ENCODE measurements at regions of chrX and their contacts with region 1.

Region 1: GRCh38 chrX:50747471-50747900 is 66.5 kb downstream of the SHROOM4 start:
- DNase-seq: no peak
- ATAC-seq: 0 out of 2 replicates have a peak, but pooled peaks have one; percentile 44
- H3K4me3 ChIP-seq: no peak overlapping the region
- H3K27ac ChIP-seq: no peak overlapping the region
- H3K4me1 ChIP-seq: no peaks in the 10 kb centered on the region
- H3K27me3 ChIP-seq: no peaks in the 10 kb centered on the region
- CTCF ChIP-seq: peak; percentile 34 to 58 (median 55); a peak in 5 of 6 replicates
- POLR2A ChIP-seq: no peak
- RAD21 ChIP-seq: peak; percentile 60

Region 2: GRCh38 chrX:50877370-50877769 is 129.9 kb after region 1 on chrX:
- CTCF ChIA-PET with region 1: no interaction called
- POLR2A ChIA-PET with region 1: no interaction called
- RAD21 ChIA-PET with region 1: no interaction called
- intact Hi-C with region 1: no loop called
- DNase-seq: no peak
- ATAC-seq: no peak
- H3K4me3 ChIP-seq: no peak overlapping the region
- H3K27ac ChIP-seq: no peak overlapping the region
- H3K4me1 ChIP-seq: peaks cover 0 to 6% of the 10 kb centered on the region in 2 experiments; a peak in 2 of 4 replicates
- H3K27me3 ChIP-seq: no peaks in the 10 kb centered on the region
- CTCF ChIP-seq: no peak
- POLR2A ChIP-seq: no peak
- RAD21 ChIP-seq: no peak

Region 3: DNA sequence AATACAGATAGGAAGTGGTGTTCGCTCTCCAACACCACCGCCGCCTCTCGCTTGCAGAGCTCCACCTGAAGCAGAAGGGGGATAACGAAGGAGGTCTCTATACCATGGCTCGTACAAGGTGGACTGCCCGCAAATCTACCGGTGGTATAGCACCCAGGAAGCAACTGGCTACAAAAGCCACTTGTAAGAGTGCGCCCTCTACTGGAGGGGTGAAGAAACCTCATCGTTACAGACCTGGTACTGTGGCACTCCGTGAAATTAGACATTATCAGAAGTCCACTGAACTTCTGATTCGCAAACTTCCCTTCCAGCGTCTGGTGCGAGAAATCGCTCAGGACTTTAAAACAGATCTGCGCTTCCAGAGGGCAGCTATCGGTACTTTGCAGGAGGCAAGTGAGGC is 157.8 kb after region 1 on chrX:
- CTCF ChIA-PET with region 1: interaction called, 21 read pairs
- POLR2A ChIA-PET with region 1: no interaction called
- RAD21 ChIA-PET with region 1: no interaction called
- intact Hi-C with region 1: loop called (anchors 1 kb)
- DNase-seq: no peak
- ATAC-seq: 0 out of 2 replicates have a peak, but pooled peaks have one; percentile 25
- H3K4me3 ChIP-seq: no peak overlapping the region
- H3K27ac ChIP-seq: no peak overlapping the region
- H3K4me1 ChIP-seq: no peaks in the 10 kb centered on the region
- H3K27me3 ChIP-seq: 0 out of 2 replicates have a peak, but pooled peaks cover 3% of the 10 kb centered on the region
- CTCF ChIP-seq: peak; percentile 6 to 53 (median 29); a peak in 3 of 6 replicates
- POLR2A ChIP-seq: no peak
- RAD21 ChIP-seq: peak; percentile 20; the same call in 1 of the 2 replicates

Region 4: DNA sequence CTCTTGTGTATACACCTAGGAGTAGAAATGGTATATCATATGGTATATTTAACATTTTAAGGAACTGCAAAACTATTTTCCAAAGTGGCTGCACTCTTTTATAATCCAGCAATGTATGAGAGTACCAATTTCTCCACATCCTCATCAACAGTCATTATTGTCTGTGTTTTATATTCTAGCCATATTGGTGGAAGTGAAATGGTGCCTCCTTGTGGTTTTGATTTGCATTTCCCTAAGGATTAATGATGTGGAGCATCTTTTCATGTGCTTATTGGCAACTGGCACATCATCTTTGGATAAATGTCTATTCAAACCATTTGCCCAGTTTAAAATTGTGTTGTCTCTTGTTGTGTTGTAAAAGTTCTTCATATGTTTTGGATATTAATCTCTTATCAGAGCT is 172.6 kb after region 1 on chrX:
- CTCF ChIA-PET with region 1: no interaction called
- POLR2A ChIA-PET with region 1: no interaction called
- RAD21 ChIA-PET with region 1: no interaction called
- intact Hi-C with region 1: loop called (anchors 5 kb)
- DNase-seq: no peak
- ATAC-seq: no peak
- H3K4me3 ChIP-seq: no peak overlapping the region
- H3K27ac ChIP-seq: no peak overlapping the region
- H3K4me1 ChIP-seq: no peaks in the 10 kb centered on the region
- H3K27me3 ChIP-seq: no peaks in the 10 kb centered on the region; the same call in 1 of the 2 replicates
- CTCF ChIP-seq: peak; percentile 5 to 39 (median 31); a peak in 3 of 6 replicates
- POLR2A ChIP-seq: no peak
- RAD21 ChIP-seq: peak; percentile 43; the same call in 1 of the 2 replicates

Measured in HCT116 (cell line).